ENCODE measurements at regions of chr15 and their contacts with region 1.

Region 1: GRCh38 chr15:98850961-98851573 is 156.5 kb downstream of the PGPEP1L start:
- DNase-seq: peak; percentile 78
- H3K4me3 ChIP-seq: no peak overlapping the region
- H3K27ac ChIP-seq: no peak overlapping the region
- H3K4me1 ChIP-seq: peaks cover 22% of the 10 kb centered on the region
- H3K27me3 ChIP-seq: no peaks in the 10 kb centered on the region
- CTCF ChIP-seq: peak; percentile 81 to 86
- POLR2A ChIP-seq: no peak

Region 2: GRCh38 chr15:98647774-98648653 is 203.1 kb before region 1 on chr15 and contains the start of gene IGF1R:
- CTCF ChIA-PET with region 1: interaction called, 27 read pairs
- POLR2A ChIA-PET with region 1: no interaction called
- dilution Hi-C with region 1: no loop called
- intact Hi-C with region 1: loop called (anchors 1 kb)
- DNase-seq: peak; percentile 85
- H3K4me3 ChIP-seq: peak within 1 kb of the TSS; percentile 67 to 96 (median 75)
- H3K27ac ChIP-seq: peak within 1 kb of the TSS; percentile 62
- H3K4me1 ChIP-seq: peaks cover 12% of the 10 kb centered on the region
- H3K27me3 ChIP-seq: peaks cover 9 to 21% of the 10 kb centered on the region in 2 experiments
- CTCF ChIP-seq: peak in 1 of 2 donors; percentile 0
- POLR2A ChIP-seq: no peak
- total RNA-seq, gene IGF1R: 50.9 and 59.1 TPM in 2 replicates

Region 3: DNA sequence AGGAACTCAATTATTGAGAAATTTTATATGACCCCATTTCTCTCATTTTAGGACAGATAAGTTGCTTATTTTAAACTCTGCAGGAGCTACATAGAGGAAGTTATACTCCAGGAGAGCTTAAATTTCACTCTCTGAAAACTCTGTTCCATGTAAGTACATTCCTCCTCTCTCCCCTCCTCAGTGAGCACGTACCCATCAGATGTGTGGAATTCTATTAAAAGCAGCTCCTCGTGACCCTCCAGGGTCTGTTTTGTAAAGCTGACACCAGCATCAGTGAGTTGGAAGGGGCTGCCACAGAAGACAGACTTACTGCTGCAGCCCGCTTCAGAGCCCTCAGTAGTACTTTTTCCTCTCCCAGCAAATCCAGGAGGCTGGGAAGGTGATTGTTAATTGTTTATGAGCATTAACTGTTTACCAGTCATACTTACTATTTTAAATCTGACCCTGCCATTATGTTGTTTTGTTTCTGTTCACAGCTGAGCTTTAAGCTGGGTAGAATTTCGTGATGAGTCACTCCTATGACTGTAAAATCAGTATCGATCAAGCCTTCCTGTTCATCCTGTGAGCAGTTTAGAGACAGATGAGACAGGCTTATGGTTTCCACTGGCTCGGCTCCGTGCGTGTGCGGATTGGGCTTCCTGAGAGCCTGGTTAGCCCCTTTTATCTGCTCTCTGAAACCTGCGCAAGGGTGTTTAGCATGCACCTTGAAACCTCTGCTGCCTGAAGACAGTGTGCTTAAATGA is 182.3 kb before region 1 on chr15:
- CTCF ChIA-PET with region 1: interaction called, 19 read pairs
- POLR2A ChIA-PET with region 1: no interaction called
- dilution Hi-C with region 1: no loop called
- intact Hi-C with region 1: no loop called
- DNase-seq: peak; percentile 75
- H3K4me3 ChIP-seq: peak overlapping the region in 1 of 3 experiments; percentile 5
- H3K27ac ChIP-seq: peak overlapping the region; percentile 64
- H3K4me1 ChIP-seq: peaks cover 49% of the 10 kb centered on the region
- H3K27me3 ChIP-seq: no peaks in the 10 kb centered on the region
- CTCF ChIP-seq: no peak
- POLR2A ChIP-seq: no peak

Region 4: DNA sequence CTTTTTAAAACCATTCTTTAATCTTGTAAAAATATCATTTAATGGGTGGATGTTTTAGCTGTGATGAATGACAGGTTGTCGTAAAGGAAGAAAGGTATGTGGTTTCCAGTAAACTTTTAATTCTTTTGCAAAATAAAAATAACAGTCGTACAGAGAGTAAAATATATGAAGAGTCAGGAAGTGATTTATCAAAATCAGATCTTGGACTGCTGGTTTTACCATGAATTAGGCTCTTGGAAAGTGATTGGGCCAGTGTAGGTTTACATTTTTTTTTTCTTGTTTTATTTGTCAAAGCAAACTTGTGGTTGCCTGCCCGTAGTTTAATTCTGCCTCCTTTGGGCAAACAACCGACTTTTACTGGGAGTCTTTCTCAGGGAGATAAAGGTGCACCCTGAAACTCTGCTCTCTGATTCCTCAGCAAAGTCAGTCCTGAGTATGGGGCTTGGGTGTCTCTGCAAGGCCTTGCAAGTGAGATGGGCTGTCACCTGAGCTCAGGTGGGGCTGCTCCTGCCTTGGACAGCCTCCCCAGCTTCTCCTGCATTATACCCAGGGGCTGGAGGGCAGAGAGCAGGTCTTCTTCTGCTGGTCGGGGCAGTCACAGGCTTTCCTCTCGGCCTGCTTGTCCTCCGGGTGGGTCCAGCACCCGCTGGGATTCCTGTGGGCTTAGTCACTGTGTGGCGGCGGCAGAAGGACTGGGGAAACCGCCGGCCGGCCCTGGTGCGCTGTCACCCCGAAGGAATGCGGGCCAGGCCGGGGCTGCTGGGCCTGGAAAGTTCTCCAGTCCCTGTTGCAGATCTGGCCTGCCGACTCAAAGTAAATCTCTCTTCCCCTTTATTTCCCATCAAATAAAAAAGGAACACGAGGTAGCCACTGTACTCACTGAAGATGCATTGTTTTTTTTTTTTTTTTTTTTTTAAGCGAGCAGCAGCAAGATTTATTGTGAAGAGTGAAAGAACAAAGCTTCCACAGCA is 123.7 kb before region 1 on chr15:
- CTCF ChIA-PET with region 1: interaction called, 9 read pairs
- POLR2A ChIA-PET with region 1: no interaction called
- dilution Hi-C with region 1: no loop called
- intact Hi-C with region 1: loop called (anchors 1 kb)
- DNase-seq: peak; percentile 92
- H3K4me3 ChIP-seq: no peak overlapping the region
- H3K27ac ChIP-seq: peak overlapping the region; percentile 98
- H3K4me1 ChIP-seq: peaks cover 35% of the 10 kb centered on the region
- H3K27me3 ChIP-seq: no peaks in the 10 kb centered on the region
- CTCF ChIP-seq: no peak
- POLR2A ChIP-seq: no peak

Region 5: DNA sequence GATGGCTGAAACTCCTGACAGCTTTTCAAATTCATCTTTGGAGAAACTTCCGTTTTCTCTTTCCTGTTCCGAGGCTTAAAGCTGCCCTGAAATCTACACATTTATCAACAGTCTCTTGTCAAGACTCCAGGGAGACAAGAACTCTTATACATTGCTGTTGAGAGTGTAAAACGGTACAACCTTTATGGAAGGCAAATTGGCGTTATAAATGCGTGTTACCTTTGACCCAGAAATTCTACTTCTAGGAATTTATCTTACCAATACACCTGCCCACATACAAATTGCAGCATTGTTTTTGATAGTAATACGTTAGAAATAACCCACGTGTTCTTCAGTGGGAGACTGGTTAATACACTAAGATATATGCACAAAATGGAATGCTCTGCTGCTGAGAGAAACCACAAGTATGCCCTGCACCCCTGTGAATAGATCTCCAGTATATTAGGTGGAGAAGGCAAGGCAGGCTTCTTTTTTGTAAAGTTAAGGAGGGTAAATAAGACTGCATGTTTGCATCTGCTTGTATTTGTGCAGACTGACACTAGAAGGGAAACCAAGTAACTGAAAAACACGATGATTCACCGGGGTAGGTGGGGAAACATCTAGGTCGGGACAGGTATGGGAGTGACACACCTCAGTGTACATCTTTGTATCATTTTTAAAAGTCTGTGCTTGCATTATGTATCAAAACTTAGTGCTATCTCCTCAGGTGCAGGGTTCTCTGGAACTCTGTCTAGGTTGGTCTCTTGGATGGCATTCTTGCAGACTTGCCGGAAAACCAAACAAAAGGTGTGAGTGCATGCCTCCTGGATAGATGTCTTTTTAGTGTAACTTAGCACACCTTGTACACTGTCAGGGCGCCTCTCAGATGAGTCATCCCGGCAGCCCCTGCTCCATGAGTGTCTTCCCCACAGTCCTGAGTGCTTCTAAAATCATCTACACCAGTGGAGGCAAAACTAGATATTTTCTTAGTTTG is 105.1 kb before region 1 on chr15:
- CTCF ChIA-PET with region 1: no interaction called
- POLR2A ChIA-PET with region 1: no interaction called
- dilution Hi-C with region 1: no loop called
- intact Hi-C with region 1: no loop called
- DNase-seq: no peak
- H3K4me3 ChIP-seq: no peak overlapping the region
- H3K27ac ChIP-seq: no peak overlapping the region
- H3K4me1 ChIP-seq: no peaks in the 10 kb centered on the region
- H3K27me3 ChIP-seq: no peaks in the 10 kb centered on the region
- CTCF ChIP-seq: no peak
- POLR2A ChIP-seq: no peak

Region 6: GRCh38 chr15:98779463-98780071 is 71.5 kb before region 1 on chr15:
- CTCF ChIA-PET with region 1: interaction called, 146 read pairs
- POLR2A ChIA-PET with region 1: no interaction called
- dilution Hi-C with region 1: no loop called
- intact Hi-C with region 1: no loop called
- DNase-seq: peak; percentile 77
- H3K4me3 ChIP-seq: no peak overlapping the region
- H3K27ac ChIP-seq: no peak overlapping the region
- H3K4me1 ChIP-seq: peaks cover 5% of the 10 kb centered on the region
- H3K27me3 ChIP-seq: no peaks in the 10 kb centered on the region
- CTCF ChIP-seq: peak; percentile 93 to 95
- POLR2A ChIP-seq: no peak

Region 7: GRCh38 chr15:98805434-98806274 is 45.4 kb before region 1 on chr15:
- CTCF ChIA-PET with region 1: interaction called, 19 read pairs
- POLR2A ChIA-PET with region 1: no interaction called
- dilution Hi-C with region 1: no loop called
- intact Hi-C with region 1: no loop called
- DNase-seq: no peak
- H3K4me3 ChIP-seq: no peak overlapping the region
- H3K27ac ChIP-seq: no peak overlapping the region
- H3K4me1 ChIP-seq: peaks cover 24% of the 10 kb centered on the region
- H3K27me3 ChIP-seq: no peaks in the 10 kb centered on the region
- CTCF ChIP-seq: peak in 1 of 2 donors; percentile 33
- POLR2A ChIP-seq: no peak

Region 8: DNA sequence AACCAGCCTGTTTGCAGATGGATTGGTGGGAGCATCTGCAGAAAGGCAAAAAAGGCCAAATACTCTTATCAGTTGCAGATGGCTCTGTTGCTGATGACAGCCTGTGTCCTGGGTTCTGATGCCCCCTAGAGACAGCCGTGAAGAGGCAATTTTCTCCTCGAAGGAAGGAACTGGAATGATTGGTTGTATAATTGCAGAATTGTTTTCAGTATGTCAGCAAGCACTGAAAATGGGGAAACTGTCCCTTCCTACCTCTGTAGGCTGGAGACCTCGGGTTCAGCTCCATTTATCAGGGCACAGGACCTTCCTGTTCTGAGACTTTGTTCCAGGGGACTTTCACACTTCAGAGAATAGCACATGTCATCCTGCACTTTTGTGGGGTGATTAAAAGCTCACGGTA is 53.5 kb after region 1 on chr15:
- CTCF ChIA-PET with region 1: interaction called, 16 read pairs
- POLR2A ChIA-PET with region 1: no interaction called
- dilution Hi-C with region 1: no loop called
- intact Hi-C with region 1: loop called (anchors 1 kb)
- DNase-seq: peak; percentile 53
- H3K4me3 ChIP-seq: no peak overlapping the region
- H3K27ac ChIP-seq: peak overlapping the region; percentile 15
- H3K4me1 ChIP-seq: peaks cover 42% of the 10 kb centered on the region
- H3K27me3 ChIP-seq: no peaks in the 10 kb centered on the region
- CTCF ChIP-seq: peak; percentile 52 to 58
- POLR2A ChIP-seq: no peak

Region 9: GRCh38 chr15:98978153-98978552 is 127.1 kb after region 1 on chr15:
- CTCF ChIA-PET with region 1: no interaction called
- POLR2A ChIA-PET with region 1: no interaction called
- dilution Hi-C with region 1: no loop called
- intact Hi-C with region 1: no loop called
- DNase-seq: no peak
- H3K4me3 ChIP-seq: no peak overlapping the region
- H3K27ac ChIP-seq: no peak overlapping the region
- H3K4me1 ChIP-seq: no peaks in the 10 kb centered on the region
- H3K27me3 ChIP-seq: no peaks in the 10 kb centered on the region
- CTCF ChIP-seq: no peak
- POLR2A ChIP-seq: no peak